Activated naive CD4-positive, alpha-beta T cell treated with anti-CD3 and anti-CD28 coated beads, Interleukin-2, amount 10 ng/mL, durations not matched to agents 7 days and 5 days (primary cell): ENCODE measurements at regions of chr1 and their contacts with region 1.

Region 1: GRCh38 chr1:37574834-37575480 is 18.2 kb downstream of the DNALI1 start:
- DNase-seq: no peak
- H3K4me3 Mint-ChIP-seq: no peak overlapping the region
- H3K27ac Mint-ChIP-seq: no peak overlapping the region
- H3K4me1 Mint-ChIP-seq: peaks cover 59% of the 10 kb centered on the region
- H3K27me3 Mint-ChIP-seq: no peaks in the 10 kb centered on the region

Region 2: GRCh38 chr1:37159102-37159501 is 415.9 kb before region 1 on chr1:
- CTCF ChIA-PET with region 1: no interaction called
- DNase-seq: no peak
- H3K4me3 Mint-ChIP-seq: no peak overlapping the region
- H3K27ac Mint-ChIP-seq: no peak overlapping the region
- H3K4me1 Mint-ChIP-seq: no peaks in the 10 kb centered on the region
- H3K27me3 Mint-ChIP-seq: no peaks in the 10 kb centered on the region

Region 3: DNA sequence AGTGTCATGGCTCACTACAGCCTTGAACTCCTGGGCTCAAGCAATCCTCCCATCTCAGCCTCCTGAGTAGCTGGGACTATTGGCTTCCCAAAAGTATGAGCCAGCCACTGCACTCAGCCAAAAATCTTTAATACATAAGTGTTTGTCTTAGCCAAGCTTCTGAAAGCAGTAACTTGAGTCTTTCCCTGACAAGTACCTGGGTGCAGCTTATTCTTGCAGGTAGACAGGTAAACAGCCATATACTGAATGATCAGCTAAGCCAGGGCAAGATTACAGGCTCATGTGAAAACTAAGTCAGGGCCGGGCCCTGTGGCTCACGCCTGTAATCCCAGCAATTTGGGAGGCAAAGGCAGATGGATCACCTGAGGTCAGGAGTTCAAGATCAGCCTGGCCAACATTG is 68.2 kb before region 1 on chr1:
- CTCF ChIA-PET with region 1: no interaction called
- DNase-seq: no peak
- H3K4me3 Mint-ChIP-seq: no peak overlapping the region
- H3K27ac Mint-ChIP-seq: no peak overlapping the region
- H3K4me1 Mint-ChIP-seq: peaks cover 17% of the 10 kb centered on the region
- H3K27me3 Mint-ChIP-seq: no peaks in the 10 kb centered on the region

Region 4: GRCh38 chr1:37561133-37562132 is 13.5 kb before region 1 on chr1:
- CTCF ChIA-PET with region 1: interaction called, 11 read pairs
- DNase-seq: peak; percentile 62
- H3K4me3 Mint-ChIP-seq: no peak overlapping the region
- H3K27ac Mint-ChIP-seq: peak overlapping the region; percentile 67
- H3K4me1 Mint-ChIP-seq: peaks cover 21% of the 10 kb centered on the region
- H3K27me3 Mint-ChIP-seq: peaks cover 9% of the 10 kb centered on the region